ENCODE measurements at regions of chr3 and their contacts with region 1.

Region 1: DNA sequence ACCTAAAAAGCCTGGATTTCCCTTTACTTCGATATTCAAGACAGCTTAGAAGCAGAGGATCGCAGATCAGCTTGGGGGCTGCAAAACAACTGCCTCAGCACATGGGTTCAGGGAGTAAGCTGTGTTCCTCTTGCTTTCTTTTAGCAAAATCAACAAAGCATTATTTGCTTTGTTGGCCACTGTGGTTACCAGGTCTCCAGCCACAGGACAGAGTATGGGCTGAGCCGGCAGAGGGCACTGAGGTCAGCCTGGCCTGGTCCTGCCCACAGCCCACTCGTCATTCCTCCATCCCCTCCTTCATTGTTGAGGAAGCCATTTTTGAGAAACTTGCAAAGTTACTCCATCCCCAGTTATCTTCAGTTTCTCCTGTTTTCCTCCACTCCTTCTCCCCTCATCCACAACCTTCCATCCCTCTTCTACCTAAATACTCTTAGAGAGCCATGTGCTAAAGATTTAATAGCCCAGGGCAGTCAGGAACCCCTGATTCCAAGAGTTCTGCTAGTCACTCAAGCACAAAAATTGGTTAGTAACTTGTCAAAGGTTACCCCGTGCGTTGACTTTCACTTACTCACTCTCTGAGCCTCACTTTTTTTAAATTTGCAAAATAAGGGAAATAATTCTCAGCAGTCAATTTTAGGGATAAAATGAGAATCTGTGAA is 60.0 kb upstream of the HES1 start:
- DNase-seq: peak; percentile 24
- ATAC-seq: peak; percentile 68
- H3K4me3 ChIP-seq: no peak overlapping the region
- H3K27ac ChIP-seq: no peak overlapping the region
- H3K4me1 ChIP-seq: peaks cover 25% of the 10 kb centered on the region
- H3K27me3 ChIP-seq: no peaks in the 10 kb centered on the region
- CTCF ChIP-seq: no peak; the same call in 1 of the 2 replicates

Region 2: GRCh38 chr3:193946945-193947344 is 129.0 kb before region 1 on chr3:
- CTCF ChIA-PET with region 1: no interaction called
- POLR2A ChIA-PET with region 1: interaction called, 22 read pairs
- intact Hi-C with region 1: no loop called
- DNase-seq: peak; percentile 82
- ATAC-seq: peak; percentile 86
- H3K4me3 ChIP-seq: no peak overlapping the region
- H3K27ac ChIP-seq: peak overlapping the region; percentile 35
- H3K4me1 ChIP-seq: peaks cover 17% of the 10 kb centered on the region
- H3K27me3 ChIP-seq: no peaks in the 10 kb centered on the region
- CTCF ChIP-seq: no peak